ENCODE measurements at regions of chr4 and their contacts with region 1.

Region 1: GRCh38 chr4:128287871-128288688 is 467 bp upstream of the PGRMC2 start:
- DNase-seq: peak; percentile 99 to 100 (median 100)
- ATAC-seq: peak; percentile 76
- H3K4me3 ChIP-seq: peak overlapping the region; percentile 69
- H3K4me3 Mint-ChIP-seq: peak overlapping the region; percentile 90
- H3K27ac ChIP-seq: peak overlapping the region; percentile 90 to 98
- H3K27ac Mint-ChIP-seq: peak overlapping the region; percentile 91
- H3K4me1 ChIP-seq: peaks cover 25% of the 10 kb centered on the region
- H3K4me1 Mint-ChIP-seq: peaks cover 43% of the 10 kb centered on the region
- H3K27me3 ChIP-seq: no peaks in the 10 kb centered on the region
- H3K27me3 Mint-ChIP-seq: no peaks in the 10 kb centered on the region
- CTCF ChIP-seq: no peak

Region 2: DNA sequence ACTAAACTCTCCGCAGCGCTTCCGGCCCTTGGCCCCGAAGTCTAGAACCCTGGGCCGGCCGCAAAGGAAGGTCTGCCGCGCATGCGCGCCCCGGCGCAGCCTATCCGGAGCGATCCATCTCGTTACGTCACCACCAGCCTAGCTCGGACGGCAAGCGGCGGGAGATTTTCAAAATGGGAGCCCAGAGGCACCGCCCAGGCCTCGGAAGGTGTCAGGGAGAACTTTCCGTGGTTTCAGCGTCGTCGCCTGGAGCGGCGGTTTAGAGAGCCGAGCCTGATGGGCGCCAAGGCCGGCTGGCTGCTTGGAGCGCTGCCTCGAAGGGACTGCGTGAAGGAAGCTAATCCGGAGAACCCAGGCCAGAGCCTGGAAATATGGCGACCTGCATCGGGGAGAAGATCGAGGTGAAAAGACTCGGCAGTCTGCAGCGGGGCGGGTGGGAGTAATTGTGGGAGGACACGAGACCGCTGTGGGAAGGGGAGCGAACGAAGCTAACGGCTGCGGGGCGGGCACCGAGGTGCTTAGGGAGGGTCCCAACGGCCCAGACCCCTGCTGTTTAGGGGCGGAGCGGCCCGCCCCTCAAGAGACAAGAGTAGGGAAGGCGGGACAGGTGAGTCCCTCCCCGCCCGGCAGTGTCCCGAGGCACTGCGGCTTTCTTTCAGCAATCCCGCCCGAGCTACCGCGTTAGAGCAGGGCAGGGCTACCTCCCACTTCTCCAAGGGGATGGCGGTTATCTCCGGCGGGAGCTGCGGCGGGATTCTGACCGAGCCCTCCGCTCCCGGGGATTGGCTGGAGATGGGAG is 407.1 kb before region 1 on chr4 and contains the start of gene PLK4:
- CTCF ChIA-PET with region 1: no interaction called
- POLR2A ChIA-PET with region 1: interaction called, 3 read pairs
- intact Hi-C with region 1: loop called in 1 of 2 experiments (anchors 5 kb)
- DNase-seq: peak; percentile 86 to 97 (median 92)
- ATAC-seq: peak; percentile 89
- H3K4me3 ChIP-seq: peak within 1 kb of the TSS; percentile 80
- H3K4me3 Mint-ChIP-seq: peak within 1 kb of the TSS; percentile 95
- H3K27ac ChIP-seq: peak within 1 kb of the TSS; percentile 73 to 76
- H3K27ac Mint-ChIP-seq: peak within 1 kb of the TSS; percentile 99
- H3K4me1 ChIP-seq: peaks cover 11% of the 10 kb centered on the region
- H3K4me1 Mint-ChIP-seq: peaks cover 29% of the 10 kb centered on the region
- H3K27me3 ChIP-seq: no peaks in the 10 kb centered on the region
- H3K27me3 Mint-ChIP-seq: no peaks in the 10 kb centered on the region
- CTCF ChIP-seq: no peak
- total RNA-seq, gene PLK4: 2.7 to 3.4 TPM

Region 3: DNA sequence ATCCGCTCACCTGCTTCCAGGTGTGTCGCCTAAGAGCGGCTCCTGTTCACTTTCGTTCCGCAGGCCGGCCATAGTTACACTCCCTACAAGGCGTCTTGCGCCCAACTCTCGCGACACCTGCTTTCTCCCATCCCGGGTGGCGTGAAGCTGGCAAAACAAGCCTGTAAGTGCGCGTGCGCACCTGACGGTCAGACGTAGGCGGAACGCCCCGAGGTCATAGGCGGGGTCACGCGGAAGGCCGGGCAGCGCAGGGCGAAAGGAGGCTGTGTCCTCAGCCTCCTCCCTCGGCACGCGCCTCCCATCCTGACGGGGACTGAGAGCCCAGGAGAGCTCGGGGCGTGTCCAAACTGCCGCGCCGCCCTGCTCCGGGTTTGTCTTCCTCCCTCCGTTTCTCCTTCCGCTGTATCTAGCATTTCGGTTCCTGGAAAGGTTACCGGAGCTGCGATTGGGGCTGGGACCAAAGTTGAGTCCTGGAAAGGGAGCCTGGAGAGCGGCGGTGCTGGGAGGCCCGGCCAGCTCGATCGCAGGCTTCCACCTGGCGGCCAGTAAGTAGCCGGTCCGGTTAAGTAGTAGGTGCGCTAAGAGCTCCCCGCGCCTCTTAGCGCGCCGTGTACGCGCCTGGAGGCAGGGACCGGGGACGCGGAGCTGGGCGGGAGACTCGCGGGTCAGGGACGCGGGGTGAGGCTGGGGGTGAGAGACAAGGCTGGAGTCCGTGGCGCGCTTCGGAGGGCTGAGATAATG is 322.8 kb before region 1 on chr4 and contains the starts of genes ABHD18 and MFSD8:
- CTCF ChIA-PET with region 1: no interaction called
- POLR2A ChIA-PET with region 1: interaction called, 25 read pairs
- intact Hi-C with region 1: loop called (anchors 1 to 2 kb)
- DNase-seq: peak; percentile 97 to 100 (median 99)
- ATAC-seq: peak; percentile 86
- H3K4me3 ChIP-seq: peak within 1 kb of the TSS; percentile 82
- H3K4me3 Mint-ChIP-seq: peak within 1 kb of the TSS; percentile 97
- H3K27ac ChIP-seq: peak within 1 kb of the TSS; percentile 92 to 93
- H3K27ac Mint-ChIP-seq: peak within 1 kb of the TSS; percentile 95
- H3K4me1 ChIP-seq: peaks cover 31% of the 10 kb centered on the region
- H3K4me1 Mint-ChIP-seq: peaks cover 59% of the 10 kb centered on the region
- H3K27me3 ChIP-seq: no peaks in the 10 kb centered on the region
- H3K27me3 Mint-ChIP-seq: no peaks in the 10 kb centered on the region
- CTCF ChIP-seq: no peak
- total RNA-seq, gene ABHD18: 15.1 to 17.0 TPM
- total RNA-seq, gene MFSD8: 25.0 to 28.0 TPM

Region 4: GRCh38 chr4:128060699-128061565 is 227.1 kb before region 1 on chr4 and contains the start of gene LARP1B:
- CTCF ChIA-PET with region 1: no interaction called
- POLR2A ChIA-PET with region 1: interaction called, 23 read pairs
- intact Hi-C with region 1: loop called in 1 of 2 experiments (anchors 2 kb)
- DNase-seq: peak; percentile 81 to 96 (median 90)
- ATAC-seq: peak; percentile 89
- H3K4me3 ChIP-seq: peak within 1 kb of the TSS; percentile 64
- H3K4me3 Mint-ChIP-seq: peak within 1 kb of the TSS; percentile 93
- H3K27ac ChIP-seq: peak within 1 kb of the TSS; percentile 60 to 70
- H3K27ac Mint-ChIP-seq: peak within 1 kb of the TSS; percentile 89
- H3K4me1 ChIP-seq: peaks cover 23% of the 10 kb centered on the region
- H3K4me1 Mint-ChIP-seq: peaks cover 6% of the 10 kb centered on the region
- H3K27me3 ChIP-seq: no peaks in the 10 kb centered on the region
- H3K27me3 Mint-ChIP-seq: no peaks in the 10 kb centered on the region
- CTCF ChIP-seq: no peak
- total RNA-seq, gene LARP1B: 8.4 to 8.9 TPM

Region 5: DNA sequence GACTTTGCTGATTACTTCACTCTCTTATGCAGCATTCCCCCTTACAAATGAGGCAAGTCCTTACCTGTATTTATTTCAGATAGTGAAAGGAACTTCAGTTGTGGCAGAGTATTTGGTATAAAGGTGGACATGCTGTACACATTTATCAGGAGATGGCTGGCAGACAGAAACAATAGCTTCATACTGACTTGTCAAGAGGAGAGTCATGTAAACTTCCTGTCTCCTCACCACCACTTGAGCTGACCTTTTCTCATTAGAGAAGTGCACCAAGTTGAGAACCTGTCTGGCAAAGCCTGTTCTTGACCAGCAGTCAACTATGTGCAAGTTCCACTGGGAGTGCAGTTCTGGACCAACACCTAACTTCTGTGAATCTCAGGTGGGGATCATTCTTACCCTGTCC is 146.2 kb before region 1 on chr4:
- CTCF ChIA-PET with region 1: no interaction called
- POLR2A ChIA-PET with region 1: no interaction called
- intact Hi-C with region 1: no loop called
- DNase-seq: no peak
- ATAC-seq: no peak
- H3K4me3 ChIP-seq: no peak overlapping the region
- H3K4me3 Mint-ChIP-seq: no peak overlapping the region
- H3K27ac ChIP-seq: no peak overlapping the region
- H3K27ac Mint-ChIP-seq: no peak overlapping the region
- H3K4me1 ChIP-seq: no peaks in the 10 kb centered on the region
- H3K4me1 Mint-ChIP-seq: no peaks in the 10 kb centered on the region
- H3K27me3 ChIP-seq: no peaks in the 10 kb centered on the region
- H3K27me3 Mint-ChIP-seq: no peaks in the 10 kb centered on the region
- CTCF ChIP-seq: no peak

Region 6: DNA sequence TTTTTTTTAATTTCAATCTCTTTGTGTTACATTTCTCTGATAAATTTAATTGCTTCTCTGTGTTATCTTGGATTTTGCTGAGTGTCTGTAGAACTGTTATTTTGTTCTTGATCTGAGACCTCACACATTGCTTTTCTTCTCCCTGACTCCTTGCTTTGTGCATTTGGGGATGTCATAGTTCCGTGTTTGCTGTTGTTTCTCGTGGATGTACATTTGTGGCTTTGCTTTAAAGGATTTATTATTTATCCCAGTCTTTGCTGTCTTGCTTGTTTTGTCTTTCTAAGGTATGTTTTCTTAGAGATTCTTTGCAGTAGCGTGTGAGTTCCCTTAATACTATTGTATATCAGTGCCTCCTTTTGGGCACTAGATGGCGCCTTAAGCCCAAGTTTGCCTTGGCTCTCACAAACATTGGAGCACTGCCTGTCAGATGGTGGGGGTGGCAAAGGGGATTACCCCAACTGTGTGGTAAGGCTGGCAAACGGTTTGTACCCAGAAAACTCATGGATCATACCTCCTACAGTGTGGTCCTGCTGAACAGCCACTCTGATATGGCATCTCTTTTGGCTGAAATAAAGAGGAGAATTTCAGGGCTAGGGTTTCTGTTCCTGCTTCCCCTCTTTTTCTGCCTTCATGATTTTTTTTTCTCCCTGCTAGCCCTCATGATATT is 96.8 kb before region 1 on chr4:
- CTCF ChIA-PET with region 1: no interaction called
- POLR2A ChIA-PET with region 1: no interaction called
- intact Hi-C with region 1: loop called in 1 of 2 experiments (anchors 5 kb)
- DNase-seq: peak; percentile 48 to 86 (median 58)
- ATAC-seq: peak; percentile 100
- H3K4me3 ChIP-seq: no peak overlapping the region
- H3K4me3 Mint-ChIP-seq: no peak overlapping the region
- H3K27ac ChIP-seq: no peak overlapping the region
- H3K27ac Mint-ChIP-seq: no peak overlapping the region
- H3K4me1 ChIP-seq: no peaks in the 10 kb centered on the region
- H3K4me1 Mint-ChIP-seq: no peaks in the 10 kb centered on the region
- H3K27me3 ChIP-seq: no peaks in the 10 kb centered on the region
- H3K27me3 Mint-ChIP-seq: no peaks in the 10 kb centered on the region
- CTCF ChIP-seq: peak; percentile 96

Region 7: DNA sequence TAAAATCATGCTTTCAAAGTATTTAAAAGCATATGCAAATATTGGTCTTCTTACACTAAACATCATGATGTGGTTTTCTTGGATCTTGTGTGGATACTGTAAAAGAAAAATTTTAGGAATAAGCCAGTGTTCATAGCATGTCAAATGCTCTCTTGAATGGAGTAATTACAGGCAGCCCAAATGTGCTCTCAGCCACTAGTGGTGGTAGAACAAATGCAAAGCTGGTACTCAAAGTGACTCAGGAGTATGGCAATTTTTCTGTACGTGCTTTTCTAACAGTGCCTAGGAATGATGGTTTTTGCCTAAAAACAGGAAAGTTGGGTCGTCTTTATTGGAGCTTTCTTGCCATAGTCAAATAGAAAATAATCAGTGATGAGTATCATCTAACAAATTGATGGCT is 20.3 kb before region 1 on chr4:
- CTCF ChIA-PET with region 1: no interaction called
- POLR2A ChIA-PET with region 1: interaction called, 4 read pairs
- intact Hi-C with region 1: loop called in 1 of 2 experiments (anchors 2 kb)
- DNase-seq: no peak
- ATAC-seq: no peak
- H3K4me3 ChIP-seq: no peak overlapping the region
- H3K4me3 Mint-ChIP-seq: no peak overlapping the region
- H3K27ac ChIP-seq: no peak overlapping the region
- H3K27ac Mint-ChIP-seq: no peak overlapping the region
- H3K4me1 ChIP-seq: no peaks in the 10 kb centered on the region
- H3K4me1 Mint-ChIP-seq: no peaks in the 10 kb centered on the region
- H3K27me3 ChIP-seq: no peaks in the 10 kb centered on the region
- H3K27me3 Mint-ChIP-seq: no peaks in the 10 kb centered on the region
- CTCF ChIP-seq: no peak

Region 8: GRCh38 chr4:129093191-129093920 is 805.3 kb after region 1 on chr4 and contains the start of gene SCLT1:
- CTCF ChIA-PET with region 1: no interaction called
- POLR2A ChIA-PET with region 1: interaction called, 7 read pairs
- intact Hi-C with region 1: loop called (anchors 5 to 10 kb)
- DNase-seq: peak; percentile 87 to 98 (median 93)
- ATAC-seq: peak; percentile 90
- H3K4me3 ChIP-seq: peak within 1 kb of the TSS; percentile 88
- H3K4me3 Mint-ChIP-seq: no peak within 1 kb of the TSS
- H3K27ac ChIP-seq: peak within 1 kb of the TSS; percentile 92 to 97
- H3K27ac Mint-ChIP-seq: no peak within 1 kb of the TSS
- H3K4me1 ChIP-seq: peaks cover 16% of the 10 kb centered on the region
- H3K4me1 Mint-ChIP-seq: peaks cover 45% of the 10 kb centered on the region
- H3K27me3 ChIP-seq: no peaks in the 10 kb centered on the region
- H3K27me3 Mint-ChIP-seq: no peaks in the 10 kb centered on the region
- CTCF ChIP-seq: no peak
- total RNA-seq, gene SCLT1: 21.8 to 21.9 TPM